WTC11 (cell line): ENCODE measurements at regions of chr16 and their contacts with region 1.

Region 1: DNA sequence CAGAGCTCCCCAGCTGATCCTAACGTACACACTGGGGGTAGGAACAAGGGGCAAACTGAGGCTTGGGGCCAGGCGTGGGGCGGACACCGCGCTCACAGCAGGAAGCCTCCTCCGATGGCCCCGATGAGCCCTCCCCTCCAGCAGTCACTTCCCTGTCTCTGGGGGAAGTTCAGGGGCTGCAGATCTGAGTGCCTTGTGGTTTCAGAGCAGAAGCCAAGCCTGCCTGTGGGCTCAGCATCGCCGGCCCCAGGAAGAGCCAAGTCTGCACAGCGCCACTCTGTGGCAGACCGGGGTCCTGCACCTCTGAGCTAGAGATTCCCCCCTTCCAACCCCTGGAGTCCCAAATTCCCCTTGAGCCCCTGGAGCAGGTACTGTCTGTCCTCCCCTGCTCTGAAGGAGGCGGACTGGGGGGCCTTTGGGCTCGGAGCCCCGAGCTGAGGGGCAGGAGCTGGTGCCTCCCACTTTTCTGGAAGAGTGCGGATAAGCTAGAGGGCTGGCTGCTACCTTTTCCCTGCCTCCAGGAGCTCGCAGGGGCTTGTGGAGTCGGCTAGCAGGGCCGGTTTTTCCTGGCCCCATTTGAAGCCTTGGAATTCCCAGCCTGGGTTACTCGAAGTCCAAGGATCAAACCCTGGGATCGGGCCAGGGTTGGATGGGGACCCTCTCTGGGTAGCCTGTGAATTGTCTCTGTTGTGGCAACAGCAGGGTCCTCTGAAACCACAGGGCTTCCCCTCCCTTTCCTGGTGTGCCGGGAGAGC is 2.9 kb downstream of the GSE1 start:
- DNase-seq: peak; percentile 92
- ATAC-seq: peak; percentile 23
- H3K4me3 Mint-ChIP-seq: peak overlapping the region; percentile 64
- H3K27ac Mint-ChIP-seq: no peak overlapping the region; the same call in 1 of the 2 replicates
- H3K4me1 Mint-ChIP-seq: peaks cover 50% of the 10 kb centered on the region
- H3K27me3 Mint-ChIP-seq: no peaks in the 10 kb centered on the region
- CTCF ChIP-seq: peak; percentile 97

Region 2: GRCh38 chr16:85369741-85370528 is 246.1 kb before region 1 on chr16:
- CTCF ChIA-PET with region 1: interaction called, 10 read pairs
- POLR2A ChIA-PET with region 1: no interaction called
- DNase-seq: peak; percentile 84
- ATAC-seq: peak; percentile 73
- H3K4me3 Mint-ChIP-seq: no peak overlapping the region
- H3K27ac Mint-ChIP-seq: no peak overlapping the region
- H3K4me1 Mint-ChIP-seq: peaks cover 21% of the 10 kb centered on the region
- H3K27me3 Mint-ChIP-seq: peaks cover 9% of the 10 kb centered on the region
- CTCF ChIP-seq: peak; percentile 85

Region 3: GRCh38 chr16:85437166-85438055 is 178.6 kb before region 1 on chr16:
- CTCF ChIA-PET with region 1: interaction called, 17 read pairs
- POLR2A ChIA-PET with region 1: no interaction called
- DNase-seq: no peak
- ATAC-seq: peak; percentile 21
- H3K4me3 Mint-ChIP-seq: peak overlapping the region; percentile 50
- H3K27ac Mint-ChIP-seq: peak overlapping the region; percentile 51; the same call in 1 of the 2 replicates
- H3K4me1 Mint-ChIP-seq: peaks cover 39% of the 10 kb centered on the region
- H3K27me3 Mint-ChIP-seq: no peaks in the 10 kb centered on the region
- CTCF ChIP-seq: no peak

Region 4: GRCh38 chr16:85491058-85491771 is 124.8 kb before region 1 on chr16:
- CTCF ChIA-PET with region 1: interaction called, 66 read pairs
- POLR2A ChIA-PET with region 1: no interaction called
- DNase-seq: peak; percentile 78
- ATAC-seq: peak; percentile 66
- H3K4me3 Mint-ChIP-seq: no peak overlapping the region
- H3K27ac Mint-ChIP-seq: peak overlapping the region; percentile 90
- H3K4me1 Mint-ChIP-seq: peaks cover 17% of the 10 kb centered on the region
- H3K27me3 Mint-ChIP-seq: no peaks in the 10 kb centered on the region
- CTCF ChIP-seq: peak; percentile 86

Region 5: GRCh38 chr16:85564277-85565051 is 51.6 kb before region 1 on chr16:
- CTCF ChIA-PET with region 1: interaction called, 17 read pairs
- POLR2A ChIA-PET with region 1: interaction called, 7 read pairs
- DNase-seq: no peak
- ATAC-seq: no peak
- H3K4me3 Mint-ChIP-seq: no peak overlapping the region
- H3K27ac Mint-ChIP-seq: peak overlapping the region; percentile 73
- H3K4me1 Mint-ChIP-seq: peaks cover 83% of the 10 kb centered on the region
- H3K27me3 Mint-ChIP-seq: no peaks in the 10 kb centered on the region
- CTCF ChIP-seq: peak; percentile 58

Region 6: GRCh38 chr16:85626191-85626981 is 10.4 kb after region 1 on chr16:
- CTCF ChIA-PET with region 1: interaction called, 115 read pairs
- POLR2A ChIA-PET with region 1: interaction called, 3 read pairs
- DNase-seq: peak; percentile 64
- ATAC-seq: peak; percentile 50
- H3K4me3 Mint-ChIP-seq: peak overlapping the region; percentile 53
- H3K27ac Mint-ChIP-seq: peak overlapping the region; percentile 70
- H3K4me1 Mint-ChIP-seq: peaks cover 50% of the 10 kb centered on the region
- H3K27me3 Mint-ChIP-seq: no peaks in the 10 kb centered on the region
- CTCF ChIP-seq: no peak

Region 7: GRCh38 chr16:85675251-85675927 is 59.4 kb after region 1 on chr16:
- CTCF ChIA-PET with region 1: no interaction called
- POLR2A ChIA-PET with region 1: no interaction called
- DNase-seq: no peak
- ATAC-seq: peak; percentile 53
- H3K4me3 Mint-ChIP-seq: no peak overlapping the region
- H3K27ac Mint-ChIP-seq: no peak overlapping the region
- H3K4me1 Mint-ChIP-seq: no peaks in the 10 kb centered on the region
- H3K27me3 Mint-ChIP-seq: no peaks in the 10 kb centered on the region
- CTCF ChIP-seq: no peak